ENCODE measurements at regions of chr5 and their contacts with region 1.

Region 1: DNA sequence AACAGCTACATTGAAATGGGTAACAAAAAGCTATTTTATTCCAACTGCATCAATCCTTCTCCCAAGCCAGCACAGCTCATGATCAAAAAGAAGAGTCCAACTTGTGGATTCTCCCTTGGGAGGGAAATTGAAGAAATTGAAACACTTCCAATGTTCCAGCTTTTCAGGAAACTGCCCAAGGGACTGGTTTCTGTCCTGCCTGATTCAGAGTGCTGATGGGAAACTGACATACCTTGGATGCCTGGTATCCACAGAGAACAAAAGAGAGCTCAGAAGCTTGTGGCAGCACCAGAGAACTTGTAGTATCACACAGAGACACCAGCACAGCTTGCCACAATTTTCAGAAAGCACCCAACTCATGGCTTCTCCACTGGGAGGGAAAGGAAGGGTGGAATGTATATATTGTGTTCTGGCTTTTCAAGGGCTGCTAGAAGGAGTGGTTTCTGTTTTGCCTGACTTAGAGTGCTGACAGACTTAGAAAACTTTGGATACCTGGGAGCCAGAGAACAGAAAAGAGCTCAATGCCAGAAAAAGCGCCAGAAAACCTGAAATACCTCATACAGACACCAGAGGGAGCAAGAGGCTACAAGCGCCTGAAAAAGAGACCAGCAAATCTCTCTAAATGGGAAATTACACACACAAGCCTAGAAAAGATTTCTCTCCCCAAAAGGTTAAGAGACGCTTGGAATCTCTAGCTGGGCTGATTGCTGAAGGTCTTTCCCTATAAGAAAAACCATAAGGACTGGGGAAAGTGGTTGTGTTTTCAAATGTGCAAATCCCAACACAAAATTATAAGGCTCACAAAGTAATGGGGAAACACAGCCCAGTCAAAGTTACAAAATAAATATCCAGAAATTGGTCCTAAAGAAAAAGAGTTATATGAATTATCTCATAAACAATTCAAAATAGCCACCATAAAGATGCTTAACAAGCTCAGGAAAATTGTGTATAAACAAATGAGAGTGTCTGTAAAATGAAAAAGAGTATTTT is 178.8 kb downstream of the SPOCK1 start:
- DNase-seq: peak; percentile 29 to 66 (median 49)
- H3K4me3 ChIP-seq: no peak overlapping the region
- H3K27ac ChIP-seq: no peak overlapping the region
- H3K4me1 ChIP-seq: no peaks in the 10 kb centered on the region
- H3K27me3 ChIP-seq: peaks cover 0 to 33% (median 5%) of the 10 kb centered on the region in 5 experiments

Region 2: GRCh38 chr5:137220523-137220927 is 99.8 kb before region 1 on chr5:
- CTCF ChIA-PET with region 1: no interaction called
- POLR2A ChIA-PET with region 1: no interaction called
- DNase-seq: peak; percentile 0 to 20 (median 18)
- H3K4me3 ChIP-seq: no peak overlapping the region
- H3K27ac ChIP-seq: no peak overlapping the region
- H3K4me1 ChIP-seq: no peaks in the 10 kb centered on the region
- H3K27me3 ChIP-seq: peaks cover 0 to 3% (median 2%) of the 10 kb centered on the region in 5 experiments

Region 3: GRCh38 chr5:137300411-137301240 is 19.7 kb before region 1 on chr5:
- CTCF ChIA-PET with region 1: no interaction called
- POLR2A ChIA-PET with region 1: no interaction called
- DNase-seq: no peak
- H3K4me3 ChIP-seq: no peak overlapping the region
- H3K27ac ChIP-seq: no peak overlapping the region
- H3K4me1 ChIP-seq: no peaks in the 10 kb centered on the region
- H3K27me3 ChIP-seq: peaks cover 0 to 9% (median 2%) of the 10 kb centered on the region in 5 experiments

Region 4: DNA sequence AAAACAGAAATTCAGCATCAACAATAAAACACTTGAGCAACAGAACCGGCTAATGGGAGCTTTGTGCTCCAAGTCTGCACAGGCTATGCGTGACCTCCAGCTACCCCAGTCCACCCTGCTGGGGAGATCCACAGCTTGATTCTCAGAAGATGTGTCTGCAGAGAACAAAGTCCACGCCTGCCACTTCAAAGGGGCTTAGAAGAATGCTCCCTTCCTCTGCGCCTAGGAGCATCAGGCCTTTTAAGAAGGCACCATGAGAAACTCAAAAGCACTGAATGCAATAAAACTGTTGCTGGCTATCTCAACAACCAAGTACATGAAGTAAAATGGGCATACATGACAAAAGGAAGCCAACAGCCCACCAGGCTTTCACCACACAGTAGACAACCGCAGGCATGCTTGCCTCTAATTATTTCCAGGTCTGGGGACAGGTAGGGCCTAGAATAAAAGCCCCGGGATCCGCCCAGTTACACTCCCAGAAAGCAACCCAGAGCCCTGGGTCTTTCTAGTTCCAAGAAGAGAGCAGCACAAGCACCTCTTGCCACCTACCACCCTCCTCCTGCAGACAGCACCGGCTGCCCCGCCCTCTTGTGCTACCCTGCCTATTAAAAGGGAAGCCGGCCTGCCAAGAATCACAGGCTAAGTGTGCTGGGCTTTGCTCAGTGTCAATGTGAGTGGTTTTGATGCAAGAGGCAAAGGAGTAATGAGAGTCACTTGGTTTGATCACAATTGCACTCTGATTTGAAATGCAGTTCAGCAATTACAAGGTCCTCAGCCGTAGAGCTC is 55.6 kb after region 1 on chr5:
- CTCF ChIA-PET with region 1: no interaction called
- POLR2A ChIA-PET with region 1: no interaction called
- DNase-seq: no peak
- H3K4me3 ChIP-seq: no peak overlapping the region
- H3K27ac ChIP-seq: no peak overlapping the region
- H3K4me1 ChIP-seq: no peaks in the 10 kb centered on the region
- H3K27me3 ChIP-seq: peaks cover 0 to 3% (median 0%) of the 10 kb centered on the region in 5 experiments

Region 5: DNA sequence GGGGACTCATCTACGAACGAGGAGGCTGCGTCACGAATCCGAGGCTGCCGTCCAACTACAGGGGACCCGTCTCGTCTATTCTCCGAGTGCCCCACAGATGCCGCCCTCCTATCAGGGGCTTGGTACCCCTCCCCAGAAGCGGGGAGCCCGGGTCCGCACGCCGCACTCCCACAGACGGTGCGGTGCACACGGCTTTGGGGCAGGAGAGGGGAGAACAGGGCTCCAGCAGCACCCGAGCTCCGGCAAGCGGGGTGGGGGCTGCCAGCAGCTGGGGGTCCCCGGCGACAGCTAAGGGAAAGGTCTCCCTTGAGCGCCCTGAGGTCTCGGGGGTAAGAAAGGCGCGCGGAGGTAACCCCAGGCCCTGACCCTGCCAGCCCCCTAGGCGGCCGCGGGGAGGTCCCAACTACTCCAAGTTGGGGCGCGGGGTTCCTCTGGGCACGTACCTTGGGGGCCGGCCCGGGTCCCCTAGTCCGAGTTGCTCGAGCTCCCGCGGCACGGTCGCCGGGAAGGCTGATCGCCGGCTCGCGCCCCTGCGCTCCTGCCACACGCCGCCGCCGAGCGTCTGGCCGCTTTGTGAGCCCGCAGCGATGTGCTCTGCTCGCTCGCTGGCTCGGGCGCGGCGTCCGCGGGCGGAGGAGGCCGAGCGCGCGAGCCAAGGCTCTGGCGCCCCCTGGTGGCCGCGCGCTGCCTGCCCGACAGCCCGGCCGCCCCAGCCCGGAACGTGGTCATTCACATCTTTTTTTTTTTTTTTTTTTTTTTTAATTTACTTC is 178.6 kb after region 1 on chr5 and contains the start of gene SPOCK1:
- CTCF ChIA-PET with region 1: interaction called, 35 read pairs
- POLR2A ChIA-PET with region 1: no interaction called
- DNase-seq: peak; percentile 73 to 85 (median 85)
- H3K4me3 ChIP-seq: peak within 1 kb of the TSS in 5 of 7 experiments; percentile 19 to 61 (median 48)
- H3K27ac ChIP-seq: no peak within 1 kb of the TSS
- H3K4me1 ChIP-seq: peaks cover 0 to 11% (median 7%) of the 10 kb centered on the region in 4 experiments
- H3K27me3 ChIP-seq: peaks cover 8 to 48% (median 24%) of the 10 kb centered on the region in 5 experiments

Region 6: GRCh38 chr5:137605411-137605810 is 285.1 kb after region 1 on chr5:
- CTCF ChIA-PET with region 1: interaction called, 15 read pairs
- POLR2A ChIA-PET with region 1: no interaction called
- DNase-seq: peak; percentile 27 to 66 (median 62)
- H3K4me3 ChIP-seq: no peak overlapping the region
- H3K27ac ChIP-seq: no peak overlapping the region
- H3K4me1 ChIP-seq: peaks cover 0 to 12% (median 4%) of the 10 kb centered on the region in 4 experiments
- H3K27me3 ChIP-seq: peaks cover 0 to 14% (median 0%) of the 10 kb centered on the region in 5 experiments

Region 7: GRCh38 chr5:137858223-137858916 is 538.0 kb after region 1 on chr5:
- CTCF ChIA-PET with region 1: no interaction called
- POLR2A ChIA-PET with region 1: no interaction called
- DNase-seq: peak; percentile 42 to 80 (median 80)
- H3K4me3 ChIP-seq: peak overlapping the region in 2 of 7 experiments; percentile 4 to 50
- H3K27ac ChIP-seq: no peak overlapping the region
- H3K4me1 ChIP-seq: peaks cover 0 to 19% (median 12%) of the 10 kb centered on the region in 4 experiments
- H3K27me3 ChIP-seq: no peaks in the 10 kb centered on the region